Activated CD4-positive, alpha-beta memory T cell treated with anti-CD3 and anti-CD28 coated beads, Interleukin-2, amount 10 ng/mL, durations not matched to agents 7 days and 5 days (primary cell): ENCODE measurements at regions of chr2 and their contacts with region 1.

Region 1: GRCh38 chr2:15577071-15577735 is 14.5 kb upstream of the DDX1 start:
- DNase-seq: peak; percentile 89
- H3K4me3 Mint-ChIP-seq: no peak overlapping the region
- H3K27ac Mint-ChIP-seq: no peak overlapping the region
- H3K4me1 Mint-ChIP-seq: peaks cover 1% of the 10 kb centered on the region
- H3K27me3 Mint-ChIP-seq: no peaks in the 10 kb centered on the region

Region 2: DNA sequence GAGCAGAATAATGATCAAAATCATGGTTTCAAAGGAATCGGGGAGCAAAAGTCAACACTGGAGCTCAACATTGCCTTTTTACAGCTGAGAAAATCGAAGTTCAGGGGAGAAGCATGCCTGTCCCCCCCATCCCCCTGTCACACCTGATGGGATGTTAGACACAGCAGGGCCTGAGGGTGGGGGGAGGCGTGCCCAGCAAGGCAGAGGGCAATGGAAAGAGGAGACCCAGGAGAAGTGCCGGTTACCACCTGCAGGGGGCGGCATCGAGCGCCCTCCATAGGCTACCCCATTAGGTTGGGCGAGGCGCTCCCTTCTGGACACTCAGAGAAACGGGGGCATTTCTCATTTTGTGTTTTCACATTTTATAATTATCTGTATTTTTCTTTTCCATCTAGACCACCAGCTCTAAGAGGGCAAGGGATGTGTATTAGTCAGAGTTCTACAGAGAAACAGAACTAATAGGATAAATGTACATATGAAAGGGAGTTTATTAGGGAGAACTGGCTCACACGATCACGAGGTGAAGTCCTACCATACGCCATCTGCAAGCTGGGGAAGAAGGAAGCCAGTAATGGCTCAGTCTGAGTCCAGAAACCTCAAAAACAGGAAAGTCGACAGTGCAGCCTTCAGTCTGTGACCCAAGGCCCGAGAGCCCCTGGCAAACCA is 673.4 kb before region 1 on chr2:
- CTCF ChIA-PET with region 1: interaction called, 19 read pairs
- POLR2A ChIA-PET with region 1: no interaction called
- DNase-seq: peak; percentile 66
- H3K4me3 Mint-ChIP-seq: no peak overlapping the region
- H3K27ac Mint-ChIP-seq: no peak overlapping the region
- H3K4me1 Mint-ChIP-seq: no peaks in the 10 kb centered on the region
- H3K27me3 Mint-ChIP-seq: no peaks in the 10 kb centered on the region

Region 3: GRCh38 chr2:15348045-15348444 is 229.2 kb before region 1 on chr2:
- CTCF ChIA-PET with region 1: no interaction called
- POLR2A ChIA-PET with region 1: no interaction called
- DNase-seq: no peak
- H3K4me3 Mint-ChIP-seq: no peak overlapping the region
- H3K27ac Mint-ChIP-seq: no peak overlapping the region
- H3K4me1 Mint-ChIP-seq: no peaks in the 10 kb centered on the region
- H3K27me3 Mint-ChIP-seq: no peaks in the 10 kb centered on the region

Region 4: DNA sequence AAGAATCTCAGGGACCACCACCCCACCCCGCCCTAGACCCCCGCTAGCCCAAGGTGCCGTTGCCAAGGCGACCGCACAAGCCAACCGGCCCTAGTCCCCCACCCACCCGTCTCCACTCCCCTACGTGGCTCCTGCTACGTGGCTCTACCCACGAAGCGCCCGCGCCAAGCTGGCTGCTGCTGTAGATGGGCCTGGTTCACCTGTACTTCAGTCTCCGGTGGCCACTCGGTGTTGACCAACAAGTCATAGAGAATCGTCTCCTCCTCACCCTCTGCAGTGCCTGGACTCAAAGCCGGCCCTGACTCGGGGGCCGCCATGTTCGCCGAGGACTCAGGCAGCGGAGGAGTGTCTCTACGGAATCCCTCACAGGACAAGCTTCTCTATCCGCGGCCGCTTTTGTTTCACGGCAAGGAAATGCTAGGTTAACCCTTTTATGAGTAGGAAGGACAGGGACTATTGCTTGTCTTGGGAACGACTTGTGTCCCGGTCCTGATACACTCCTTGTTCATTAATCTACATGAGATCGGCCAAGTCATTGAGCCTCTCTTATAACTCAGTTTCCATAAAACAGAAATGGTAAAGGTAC is 16.1 kb before region 1 on chr2 and contains the start of gene NBAS:
- CTCF ChIA-PET with region 1: interaction called, 17 read pairs
- POLR2A ChIA-PET with region 1: interaction called, 7 read pairs
- DNase-seq: peak; percentile 86
- H3K4me3 Mint-ChIP-seq: peak within 1 kb of the TSS; percentile 100
- H3K27ac Mint-ChIP-seq: peak within 1 kb of the TSS; percentile 90
- H3K4me1 Mint-ChIP-seq: peaks cover 36% of the 10 kb centered on the region
- H3K27me3 Mint-ChIP-seq: peaks cover 7% of the 10 kb centered on the region
- total RNA-seq, gene NBAS: 30.5 to 31.1 TPM

Region 5: GRCh38 chr2:15591692-15592463 is 14.7 kb after region 1 on chr2 and contains the start of gene DDX1:
- CTCF ChIA-PET with region 1: interaction called, 15 read pairs
- POLR2A ChIA-PET with region 1: interaction called, 3 read pairs
- DNase-seq: peak; percentile 88
- H3K4me3 Mint-ChIP-seq: peak within 1 kb of the TSS; percentile 81
- H3K27ac Mint-ChIP-seq: peak within 1 kb of the TSS; percentile 79
- H3K4me1 Mint-ChIP-seq: peaks cover 38% of the 10 kb centered on the region
- H3K27me3 Mint-ChIP-seq: no peaks in the 10 kb centered on the region
- total RNA-seq, gene DDX1: 55.4 to 55.6 TPM